Esophagus muscularis mucosa (tissue), 4 donors: ENCODE measurements at regions of chr20 and their contacts with region 1.

Region 1: DNA sequence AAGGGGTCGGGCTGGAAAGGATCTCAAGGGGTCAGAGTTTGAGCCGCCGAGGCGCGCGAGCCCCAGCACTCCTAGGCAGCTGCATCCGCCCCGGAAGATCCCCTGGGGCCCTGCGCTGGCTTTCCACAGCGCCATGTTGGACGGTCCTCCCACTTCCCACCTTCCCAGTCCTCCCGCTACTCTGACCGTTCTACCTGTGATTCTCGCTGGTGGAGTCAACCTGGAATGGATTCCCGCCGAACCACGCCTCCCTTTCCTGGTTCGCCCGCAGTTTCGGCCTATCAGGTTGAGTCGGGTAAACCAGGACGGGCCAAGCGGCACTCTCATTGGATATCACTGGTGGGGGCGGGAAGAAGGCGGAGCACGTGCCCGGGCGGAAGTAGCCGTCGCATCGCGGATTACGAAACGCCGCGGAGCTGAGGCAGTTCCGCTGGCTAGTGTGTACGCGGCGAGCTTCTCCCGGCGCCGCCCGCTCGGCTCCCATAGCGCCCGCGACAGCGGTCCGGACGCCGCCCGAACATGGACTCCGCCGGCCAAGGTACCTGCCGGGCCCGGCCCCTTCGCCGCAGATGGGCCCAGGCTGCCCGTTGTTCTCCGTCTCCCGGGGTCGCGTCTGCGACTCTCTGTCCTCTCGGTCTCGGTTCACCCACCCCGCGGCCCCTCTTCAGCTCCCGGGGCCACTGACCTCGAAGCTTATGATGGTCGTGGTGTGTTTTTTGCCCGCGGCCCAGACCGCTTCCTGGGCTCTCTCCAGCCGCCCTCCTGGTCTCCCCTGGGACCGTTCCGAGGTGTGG is at the start of gene TPD52L2:
- DNase-seq: peak; percentile 100
- H3K4me3 ChIP-seq: peak within 1 kb of the TSS; percentile 76 to 97 (median 86)
- H3K27ac ChIP-seq: peak within 1 kb of the TSS; percentile 89 to 99 (median 96)
- H3K4me1 ChIP-seq: peaks cover 25 to 64% (median 39%) of the 10 kb centered on the region in 4 donors
- H3K27me3 ChIP-seq: no peaks in the 10 kb centered on the region
- CTCF ChIP-seq: peak in 1 of 3 experiments; percentile 19
- EP300 ChIP-seq: no peak
- POLR2A ChIP-seq: peak; percentile 96
- total RNA-seq, gene TPD52L2: 110 to 162 (median 134) TPM

Region 2: GRCh38 chr20:63785691-63786131 is 79.3 kb before region 1 on chr20:
- intact Hi-C with region 1: loop called (anchors 5 kb)
- DNase-seq: no peak
- H3K4me3 ChIP-seq: no peak overlapping the region
- H3K27ac ChIP-seq: no peak overlapping the region
- H3K4me1 ChIP-seq: peaks cover 0 to 36% (median 10%) of the 10 kb centered on the region in 4 donors
- H3K27me3 ChIP-seq: no peaks in the 10 kb centered on the region
- CTCF ChIP-seq: no peak
- EP300 ChIP-seq: no peak
- POLR2A ChIP-seq: no peak

Region 3: DNA sequence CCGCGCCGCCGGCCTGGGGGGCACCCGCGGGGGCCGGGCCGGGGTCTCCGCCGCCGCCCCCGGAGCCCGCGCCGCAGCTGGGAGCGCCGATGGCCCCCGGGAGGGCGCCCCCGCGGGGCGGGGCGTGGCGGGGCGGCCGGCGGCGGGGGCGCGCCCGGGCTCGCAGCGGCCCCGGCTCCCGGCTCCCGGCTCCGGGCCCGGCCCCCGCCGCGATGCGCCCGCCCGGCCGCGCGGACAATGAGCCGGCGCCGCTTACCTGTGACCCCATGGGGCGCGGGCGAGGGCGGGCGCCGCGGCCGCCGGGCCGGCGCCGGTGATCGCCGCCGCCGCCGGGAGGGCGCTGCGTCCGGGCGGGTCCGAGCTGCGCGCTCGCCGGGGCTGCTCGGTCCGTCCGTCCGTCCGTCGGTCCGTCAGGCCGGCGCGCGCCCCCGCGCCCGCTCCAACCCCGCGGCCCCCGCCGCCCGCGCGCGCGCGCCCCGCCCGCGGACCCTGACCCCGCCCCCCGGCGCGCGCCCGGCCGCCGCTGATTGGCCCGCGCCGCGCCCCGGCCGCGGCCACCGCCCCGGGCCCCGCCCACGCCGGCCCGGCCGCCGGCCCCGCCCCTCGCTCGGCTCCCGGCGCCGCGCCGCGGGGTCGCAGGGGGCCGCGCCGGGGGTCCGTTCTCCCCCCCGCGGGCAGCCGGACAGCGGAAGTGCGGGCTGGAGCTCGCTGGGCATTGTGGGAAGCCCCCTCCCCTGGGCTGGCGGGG is 34.0 kb before region 1 on chr20 and contains the start of gene ZBTB46:
- intact Hi-C with region 1: loop called (anchors 2 kb)
- DNase-seq: no peak
- H3K4me3 ChIP-seq: peak within 1 kb of the TSS; percentile 74 to 91 (median 76)
- H3K27ac ChIP-seq: peak within 1 kb of the TSS; percentile 72 to 82 (median 80)
- H3K4me1 ChIP-seq: peaks cover 43 to 72% (median 64%) of the 10 kb centered on the region in 4 donors
- H3K27me3 ChIP-seq: peaks cover 0 to 36% (median 0%) of the 10 kb centered on the region in 4 donors
- CTCF ChIP-seq: no peak
- EP300 ChIP-seq: no peak
- POLR2A ChIP-seq: no peak
- total RNA-seq, gene ZBTB46: 9.6 to 22.8 (median 13.8) TPM